ENCODE measurements at regions of chrX and their contacts with region 1.

Region 1: GRCh38 chrX:101097546-101098453 is at the start of gene CENPI:
- DNase-seq: peak; percentile 95 to 97
- ATAC-seq: peak; percentile 99
- H3K4me3 ChIP-seq: peak within 1 kb of the TSS in 1 of 2 donors; percentile 48
- H3K27ac ChIP-seq: peak within 1 kb of the TSS in 1 of 2 donors; percentile 71
- H3K4me1 ChIP-seq: no peaks in the 10 kb centered on the region
- H3K27me3 ChIP-seq: no peaks in the 10 kb centered on the region
- total RNA-seq, gene CENPI: 1.3 to 1.7 TPM

Region 2: GRCh38 chrX:101051549-101052302 is 46.1 kb before region 1 on chrX and contains the start of gene TRMT2B:
- intact Hi-C with region 1: loop called (anchors 5 kb)
- DNase-seq: peak; percentile 88 to 91
- ATAC-seq: peak; percentile 95
- H3K4me3 ChIP-seq: peak within 1 kb of the TSS; percentile 60 to 66
- H3K27ac ChIP-seq: peak within 1 kb of the TSS in 1 of 2 donors; percentile 73
- H3K4me1 ChIP-seq: no peaks in the 10 kb centered on the region
- H3K27me3 ChIP-seq: no peaks in the 10 kb centered on the region
- total RNA-seq, gene TRMT2B: 15.1 to 19.6 TPM

Measured in aorta (tissue), 5 donors.